SK-N-SH (cell line): ENCODE measurements at regions of chr7 and their contacts with region 1.

Region 1: DNA sequence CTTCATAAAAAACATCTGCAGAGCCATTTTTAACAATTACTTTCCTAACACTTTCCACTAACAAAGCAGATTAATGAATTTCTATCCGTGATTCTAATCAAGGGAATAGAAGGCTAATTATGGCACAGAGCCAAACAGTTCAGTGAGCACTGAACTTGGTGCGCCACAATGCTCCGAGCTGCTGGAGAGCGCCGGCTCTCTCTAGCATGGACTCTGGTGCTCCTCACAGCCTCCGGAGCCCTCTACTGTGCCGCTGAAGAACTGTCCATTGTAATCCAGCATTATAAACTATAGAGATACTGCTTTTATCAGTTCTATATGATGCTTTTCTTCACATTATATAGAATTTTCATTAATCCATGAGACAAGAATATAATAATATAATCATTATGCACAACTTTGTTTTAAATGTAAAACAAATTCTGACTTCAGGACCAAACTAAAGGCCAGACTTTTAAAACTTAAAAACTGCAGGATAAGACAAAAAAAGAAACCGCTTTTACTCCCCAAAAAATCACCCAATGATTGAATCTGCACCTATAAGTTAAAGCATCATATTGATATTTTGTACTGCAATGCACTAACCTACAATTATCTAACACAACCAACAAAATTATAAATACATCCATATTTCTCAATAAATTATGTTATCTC is 123.6 kb downstream of the RNF32 start:
- DNase-seq: peak; percentile 79
- H3K4me3 ChIP-seq: no peak overlapping the region
- H3K27ac ChIP-seq: peak overlapping the region in 1 of 2 experiments; percentile 41; a peak in 1 of 4 replicates
- H3K4me1 ChIP-seq: peaks cover 0 to 13% of the 10 kb centered on the region in 2 experiments; a peak in 2 of 4 replicates
- H3K27me3 ChIP-seq: no peaks in the 10 kb centered on the region
- CTCF ChIP-seq: peak; percentile 90
- EP300 ChIP-seq: peak in 1 of 2 experiments; percentile 39; a peak in 1 of 4 replicates
- RAD21 ChIP-seq: peak; percentile 99

Region 2: GRCh38 chr7:156209084-156209483 is 555.1 kb before region 1 on chr7:
- CTCF ChIA-PET with region 1: no interaction called
- POLR2A ChIA-PET with region 1: no interaction called
- DNase-seq: no peak
- H3K4me3 ChIP-seq: no peak overlapping the region
- H3K27ac ChIP-seq: no peak overlapping the region
- H3K4me1 ChIP-seq: no peaks in the 10 kb centered on the region
- H3K27me3 ChIP-seq: peaks cover 55% of the 10 kb centered on the region
- CTCF ChIP-seq: no peak
- EP300 ChIP-seq: no peak
- RAD21 ChIP-seq: no peak

Region 3: GRCh38 chr7:156487811-156488533 is 276.2 kb before region 1 on chr7:
- CTCF ChIA-PET with region 1: no interaction called
- POLR2A ChIA-PET with region 1: no interaction called
- DNase-seq: no peak
- H3K4me3 ChIP-seq: no peak overlapping the region
- H3K27ac ChIP-seq: no peak overlapping the region
- H3K4me1 ChIP-seq: no peaks in the 10 kb centered on the region
- H3K27me3 ChIP-seq: peaks cover 13% of the 10 kb centered on the region; the same call in 1 of the 2 replicates
- CTCF ChIP-seq: no peak
- EP300 ChIP-seq: no peak
- RAD21 ChIP-seq: no peak

Region 4: DNA sequence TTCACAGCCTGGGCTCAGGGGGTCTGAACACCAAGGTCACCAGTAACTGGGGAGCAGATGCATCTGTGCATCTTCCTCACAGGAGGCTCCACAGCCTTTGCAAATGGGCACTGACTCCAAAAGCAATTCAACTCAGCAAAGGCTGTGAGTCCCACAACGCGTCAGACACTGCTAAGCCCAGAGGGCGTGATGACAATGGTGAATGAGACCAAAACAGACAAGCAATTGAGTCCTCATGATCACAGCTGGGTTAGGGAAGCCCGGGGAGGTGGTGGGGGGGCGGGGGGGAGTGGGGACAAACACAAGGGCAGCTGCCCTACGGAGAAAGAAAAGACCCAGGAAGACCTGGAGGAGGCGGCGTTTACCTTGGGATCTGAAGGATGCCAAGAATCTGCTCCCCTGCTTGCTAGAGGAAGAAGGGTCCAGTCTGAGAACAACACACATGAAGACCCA is 185.1 kb before region 1 on chr7:
- CTCF ChIA-PET with region 1: no interaction called
- POLR2A ChIA-PET with region 1: no interaction called
- DNase-seq: no peak
- H3K4me3 ChIP-seq: no peak overlapping the region
- H3K27ac ChIP-seq: no peak overlapping the region
- H3K4me1 ChIP-seq: no peaks in the 10 kb centered on the region
- H3K27me3 ChIP-seq: no peaks in the 10 kb centered on the region
- CTCF ChIP-seq: no peak
- EP300 ChIP-seq: no peak
- RAD21 ChIP-seq: no peak

Region 5: GRCh38 chr7:156747691-156748090 is 16.5 kb before region 1 on chr7:
- CTCF ChIA-PET with region 1: interaction called, 21 read pairs
- POLR2A ChIA-PET with region 1: no interaction called
- DNase-seq: no peak
- H3K4me3 ChIP-seq: no peak overlapping the region
- H3K27ac ChIP-seq: no peak overlapping the region
- H3K4me1 ChIP-seq: no peaks in the 10 kb centered on the region; a peak in 1 of 4 replicates
- H3K27me3 ChIP-seq: no peaks in the 10 kb centered on the region
- CTCF ChIP-seq: no peak
- EP300 ChIP-seq: no peak
- RAD21 ChIP-seq: no peak

Region 6: DNA sequence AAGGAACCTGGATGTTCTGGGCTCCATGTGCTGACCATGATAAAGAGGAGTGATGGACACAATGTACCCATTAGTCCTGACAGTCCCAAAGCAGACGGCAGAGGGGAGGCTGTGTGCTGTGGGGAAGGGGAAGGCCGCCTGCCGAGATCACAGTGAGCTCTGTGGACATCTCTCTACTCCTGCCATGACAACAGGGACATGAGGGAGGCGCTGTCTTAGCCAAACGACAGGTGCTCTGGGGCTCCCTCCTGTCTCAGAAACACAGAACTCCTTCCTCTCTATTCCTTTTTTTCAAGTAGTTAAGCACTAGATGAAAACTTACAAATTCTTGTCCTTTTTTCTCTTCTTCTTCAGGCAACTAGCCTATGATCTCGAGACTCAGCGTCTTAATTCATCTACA is 10.5 kb before region 1 on chr7:
- CTCF ChIA-PET with region 1: interaction called, 13 read pairs
- POLR2A ChIA-PET with region 1: no interaction called
- DNase-seq: no peak
- H3K4me3 ChIP-seq: no peak overlapping the region
- H3K27ac ChIP-seq: no peak overlapping the region
- H3K4me1 ChIP-seq: no peaks in the 10 kb centered on the region; a peak in 1 of 4 replicates
- H3K27me3 ChIP-seq: no peaks in the 10 kb centered on the region
- CTCF ChIP-seq: no peak
- EP300 ChIP-seq: no peak
- RAD21 ChIP-seq: no peak

Region 7: GRCh38 chr7:156780724-156781455 is 16.7 kb after region 1 on chr7:
- CTCF ChIA-PET with region 1: interaction called, 25 read pairs
- POLR2A ChIA-PET with region 1: interaction called, 5 read pairs
- DNase-seq: no peak
- H3K4me3 ChIP-seq: no peak overlapping the region
- H3K27ac ChIP-seq: peak overlapping the region in 1 of 2 experiments; percentile 96; a peak in 2 of 4 replicates
- H3K4me1 ChIP-seq: peaks cover 0 to 46% of the 10 kb centered on the region in 2 experiments; a peak in 2 of 4 replicates
- H3K27me3 ChIP-seq: no peaks in the 10 kb centered on the region
- CTCF ChIP-seq: no peak
- EP300 ChIP-seq: no peak
- RAD21 ChIP-seq: no peak